Caco-2 (cell line): ENCODE measurements at regions of chr7 and their contacts with region 1.

Region 1: GRCh38 chr7:98168181-98168905 is 42.9 kb upstream of the BHLHA15 start:
- DNase-seq: peak; percentile 83 to 84
- H3K4me3 ChIP-seq: no peak overlapping the region
- H3K4me3 Mint-ChIP-seq: no peak overlapping the region
- H3K27ac Mint-ChIP-seq: no peak overlapping the region
- H3K4me1 ChIP-seq: 0 out of 2 replicates have a peak, but pooled peaks cover 3% of the 10 kb centered on the region
- H3K4me1 Mint-ChIP-seq: peaks cover 6% of the 10 kb centered on the region
- H3K27me3 ChIP-seq: no peaks in the 10 kb centered on the region
- H3K27me3 Mint-ChIP-seq: no peaks in the 10 kb centered on the region
- CTCF ChIP-seq: peak; percentile 86 to 93

Region 2: DNA sequence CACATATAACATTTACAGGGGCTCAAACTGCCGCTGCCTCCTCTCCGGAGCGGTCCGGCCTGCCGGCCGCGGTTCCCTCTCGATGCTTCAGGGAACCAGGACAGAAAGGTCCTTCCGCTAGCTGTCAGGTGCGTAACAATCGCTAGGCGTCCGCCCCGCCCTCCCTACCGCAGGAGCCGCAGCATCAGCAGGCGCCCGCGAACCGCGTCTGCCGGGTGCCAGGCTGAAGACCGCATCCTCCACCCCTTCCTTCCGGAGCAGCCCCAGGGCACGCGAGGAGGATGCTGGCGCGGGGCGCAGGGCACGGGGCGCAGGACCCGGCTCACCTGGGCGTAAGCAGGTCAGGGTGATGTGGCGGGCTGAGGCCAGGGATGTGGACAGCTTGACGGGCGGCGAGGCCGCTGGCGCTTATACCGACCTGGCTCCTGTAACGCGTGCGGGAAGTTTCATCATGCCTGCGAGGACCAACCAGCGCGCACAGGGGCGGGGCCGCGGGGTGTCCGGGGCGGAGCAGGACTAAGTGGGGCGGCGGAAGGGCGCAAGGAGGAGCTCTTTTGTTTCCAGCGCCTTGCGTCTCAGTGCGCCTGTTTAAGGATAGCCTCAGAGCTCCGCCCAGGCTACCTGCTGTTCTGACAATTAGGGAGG is 296.2 kb before region 1 on chr7 and contains the start of gene ASNS:
- CTCF ChIA-PET with region 1: interaction called, 3 read pairs
- POLR2A ChIA-PET with region 1: no interaction called
- intact Hi-C with region 1: loop called (anchors 5 kb)
- DNase-seq: peak; percentile 96 to 98
- H3K4me3 ChIP-seq: peak within 1 kb of the TSS; percentile 97
- H3K4me3 Mint-ChIP-seq: peak within 1 kb of the TSS; percentile 91
- H3K27ac Mint-ChIP-seq: peak within 1 kb of the TSS; percentile 92
- H3K4me1 ChIP-seq: no peaks in the 10 kb centered on the region
- H3K4me1 Mint-ChIP-seq: peaks cover 6% of the 10 kb centered on the region
- H3K27me3 ChIP-seq: no peaks in the 10 kb centered on the region
- H3K27me3 Mint-ChIP-seq: no peaks in the 10 kb centered on the region
- CTCF ChIP-seq: no peak
- total RNA-seq, gene ASNS: 295 and 374 TPM in 2 replicates

Region 3: DNA sequence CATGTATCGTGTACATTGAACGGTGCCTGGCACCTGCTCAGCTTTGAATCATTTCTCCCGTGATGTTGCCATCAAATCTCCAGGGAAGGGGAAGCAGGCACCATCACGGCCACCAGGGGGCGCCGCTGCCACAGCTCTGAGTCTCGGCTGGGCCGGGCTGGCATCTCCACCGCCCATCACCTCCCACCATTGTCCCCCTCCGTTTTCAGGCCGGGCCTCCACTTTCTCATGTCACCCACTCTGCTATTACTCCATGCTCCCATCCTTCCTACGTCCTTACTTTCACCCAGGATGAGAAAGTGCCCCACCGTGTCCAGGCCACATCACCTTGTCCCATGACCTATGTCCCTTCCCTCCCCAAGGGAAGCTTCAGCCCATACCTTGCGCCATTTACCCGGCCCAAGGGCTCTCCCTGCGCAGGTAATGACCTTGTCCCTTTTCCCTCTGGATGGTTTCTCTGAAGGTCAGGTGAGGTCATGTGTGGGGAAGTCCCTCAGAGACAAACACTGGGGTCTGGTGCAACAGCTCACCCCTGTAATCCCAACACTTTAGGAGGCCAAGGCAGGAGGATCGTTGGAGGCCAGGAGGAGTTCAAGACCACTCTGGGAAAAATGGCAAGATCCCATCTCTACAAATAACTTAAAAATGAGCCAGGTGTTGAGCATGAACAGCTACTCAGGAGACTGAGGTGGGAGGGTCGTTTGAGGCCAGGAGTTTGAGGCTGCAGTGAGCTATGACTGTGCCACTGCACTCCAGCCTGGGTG is 146.6 kb before region 1 on chr7:
- CTCF ChIA-PET with region 1: interaction called, 79 read pairs
- POLR2A ChIA-PET with region 1: no interaction called
- intact Hi-C with region 1: loop called (anchors 1 kb)
- DNase-seq: peak; percentile 69 to 88
- H3K4me3 ChIP-seq: no peak overlapping the region
- H3K4me3 Mint-ChIP-seq: no peak overlapping the region
- H3K27ac Mint-ChIP-seq: no peak overlapping the region
- H3K4me1 ChIP-seq: no peaks in the 10 kb centered on the region
- H3K4me1 Mint-ChIP-seq: no peaks in the 10 kb centered on the region
- H3K27me3 ChIP-seq: no peaks in the 10 kb centered on the region
- H3K27me3 Mint-ChIP-seq: peaks cover 2% of the 10 kb centered on the region
- CTCF ChIP-seq: peak; percentile 92 to 93

Region 4: GRCh38 chr7:98106647-98107445 is 61.5 kb before region 1 on chr7 and contains the start of gene LMTK2:
- CTCF ChIA-PET with region 1: interaction called, 11 read pairs
- POLR2A ChIA-PET with region 1: no interaction called
- intact Hi-C with region 1: loop called (anchors 1 kb)
- DNase-seq: peak; percentile 92 to 98
- H3K4me3 ChIP-seq: peak within 1 kb of the TSS; percentile 99
- H3K4me3 Mint-ChIP-seq: peak within 1 kb of the TSS; percentile 91
- H3K27ac Mint-ChIP-seq: peak within 1 kb of the TSS; percentile 23
- H3K4me1 ChIP-seq: peaks cover 27% of the 10 kb centered on the region
- H3K4me1 Mint-ChIP-seq: peaks cover 7% of the 10 kb centered on the region
- H3K27me3 ChIP-seq: no peaks in the 10 kb centered on the region
- H3K27me3 Mint-ChIP-seq: no peaks in the 10 kb centered on the region
- CTCF ChIP-seq: peak; percentile 89 to 90
- total RNA-seq, gene LMTK2: 21.9 and 22.3 TPM in 2 replicates

Region 5: DNA sequence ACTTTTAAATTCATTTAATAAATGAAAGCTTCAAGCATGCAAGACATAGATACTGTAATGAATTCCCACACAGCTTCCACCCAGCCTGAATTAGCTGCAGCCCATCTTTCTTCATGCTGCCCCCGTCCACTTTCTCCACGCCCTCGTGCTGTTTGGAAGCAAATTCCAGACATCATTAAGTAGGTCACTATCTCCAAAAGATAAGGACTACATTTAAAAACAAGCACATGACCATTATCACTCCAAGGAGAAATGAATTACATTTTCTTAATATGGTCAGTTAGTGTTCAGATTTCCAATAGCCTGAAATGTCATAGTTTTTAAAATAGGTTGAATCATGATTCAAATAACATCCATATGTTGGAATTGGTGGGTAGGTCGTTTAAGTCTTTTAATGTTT is 37.4 kb before region 1 on chr7:
- CTCF ChIA-PET with region 1: interaction called, 10 read pairs
- POLR2A ChIA-PET with region 1: no interaction called
- intact Hi-C with region 1: no loop called
- DNase-seq: no peak
- H3K4me3 ChIP-seq: no peak overlapping the region
- H3K4me3 Mint-ChIP-seq: peak overlapping the region; percentile 26
- H3K27ac Mint-ChIP-seq: peak overlapping the region; percentile 33
- H3K4me1 ChIP-seq: peaks cover 40% of the 10 kb centered on the region
- H3K4me1 Mint-ChIP-seq: peaks cover 32% of the 10 kb centered on the region
- H3K27me3 ChIP-seq: no peaks in the 10 kb centered on the region
- H3K27me3 Mint-ChIP-seq: no peaks in the 10 kb centered on the region
- CTCF ChIP-seq: no peak

Region 6: GRCh38 chr7:98360221-98361124 is 192.1 kb after region 1 on chr7:
- CTCF ChIA-PET with region 1: no interaction called
- POLR2A ChIA-PET with region 1: no interaction called
- intact Hi-C with region 1: no loop called
- DNase-seq: peak; percentile 70 to 82
- H3K4me3 ChIP-seq: no peak overlapping the region
- H3K4me3 Mint-ChIP-seq: peak overlapping the region; percentile 32
- H3K27ac Mint-ChIP-seq: peak overlapping the region; percentile 91
- H3K4me1 ChIP-seq: peaks cover 35% of the 10 kb centered on the region
- H3K4me1 Mint-ChIP-seq: peaks cover 21% of the 10 kb centered on the region
- H3K27me3 ChIP-seq: no peaks in the 10 kb centered on the region
- H3K27me3 Mint-ChIP-seq: no peaks in the 10 kb centered on the region
- CTCF ChIP-seq: peak in 1 of 2 experiments; percentile 44